ENCODE measurements at regions of chr10 and their contacts with region 1.

Region 1: DNA sequence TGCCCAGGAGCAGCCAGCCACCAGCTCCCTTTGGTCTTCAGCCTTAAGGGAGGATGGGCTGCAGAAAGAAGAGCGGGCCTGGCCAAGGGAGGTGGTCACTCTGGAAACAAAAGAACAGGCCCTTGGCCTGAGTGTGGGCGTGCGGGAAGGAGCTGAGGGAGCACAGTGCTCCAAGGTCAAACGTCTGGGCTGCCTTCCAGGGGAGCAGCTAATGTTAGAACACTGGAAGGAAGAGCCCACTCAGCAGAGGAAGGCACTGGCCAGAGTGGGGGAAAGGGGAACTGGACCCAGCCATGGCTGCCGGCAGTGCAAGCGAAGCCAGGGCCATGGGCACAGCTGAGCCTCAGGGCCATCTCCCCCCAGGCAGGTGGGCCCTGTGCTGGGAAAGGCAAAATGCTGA is 42.7 kb downstream of the FAM53B start:
- DNase-seq: peak; percentile 92 to 97
- ATAC-seq: peak; percentile 86 to 91 (median 88)
- H3K4me3 ChIP-seq: no peak overlapping the region
- H3K27ac ChIP-seq: peak overlapping the region; percentile 74 to 98 (median 91)
- H3K4me1 ChIP-seq: peaks cover 72 to 100% (median 97%) of the 10 kb centered on the region in 9 donors
- H3K27me3 ChIP-seq: no peaks in the 10 kb centered on the region
- CTCF ChIP-seq: peak in 3 of 9 donors; percentile 9 to 30 (median 12)

Region 2: DNA sequence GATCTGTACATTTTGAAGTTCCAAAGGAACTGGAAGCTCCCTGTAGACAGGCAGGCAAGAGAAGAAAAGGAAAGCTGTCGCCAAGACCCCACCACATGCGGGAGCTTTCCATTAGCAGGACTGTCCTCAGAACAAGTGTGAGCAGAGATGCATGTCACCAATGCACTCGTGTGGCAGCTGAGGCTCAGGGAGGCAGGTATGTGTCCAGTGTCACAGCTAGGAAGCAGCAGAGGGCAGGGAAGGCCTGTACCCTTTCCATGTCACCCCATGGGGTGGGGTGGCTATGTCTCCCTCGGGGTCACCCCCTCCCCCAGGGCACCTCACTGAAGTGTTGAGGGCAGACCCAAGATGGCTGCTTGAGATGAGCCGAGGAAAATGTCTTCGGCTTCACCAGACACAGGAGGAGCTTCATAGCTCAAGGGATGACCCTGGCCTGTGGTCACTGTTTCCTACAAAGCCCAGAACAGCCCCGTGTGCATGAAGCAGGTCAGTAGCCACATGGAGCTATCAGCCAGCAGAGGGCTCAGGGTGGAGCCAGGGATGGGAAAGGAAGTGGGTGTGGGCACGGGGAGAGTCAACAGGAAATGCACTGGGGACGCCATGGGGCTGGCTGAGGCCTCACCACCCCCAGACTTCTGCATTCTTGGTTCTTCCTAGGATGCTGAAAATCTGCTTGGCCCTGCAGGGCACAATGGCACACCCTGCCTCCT is 53.9 kb before region 1 on chr10:
- intact Hi-C with region 1: loop called in 2 of 10 experiments (anchors 5 kb)
- DNase-seq: peak; percentile 64 to 65
- ATAC-seq: peak in 7 of 8 donors; percentile 25 to 76 (median 55)
- H3K4me3 ChIP-seq: no peak overlapping the region
- H3K27ac ChIP-seq: peak overlapping the region; percentile 46 to 91 (median 78)
- H3K4me1 ChIP-seq: peaks cover 72 to 100% (median 99%) of the 10 kb centered on the region in 9 donors
- H3K27me3 ChIP-seq: no peaks in the 10 kb centered on the region
- CTCF ChIP-seq: peak in 6 of 9 donors; percentile 16 to 52 (median 32)

Measured in heart right ventricle (tissue), 16 donors.